GM13977 (cell line): ENCODE measurements at regions of chr13 and their contacts with region 1.

Region 1: GRCh38 chr13:42333613-42334328 is 61.8 kb downstream of the AKAP11 start:
- DNase-seq: peak; percentile 54
- CTCF ChIP-seq: peak; percentile 81

Region 2: DNA sequence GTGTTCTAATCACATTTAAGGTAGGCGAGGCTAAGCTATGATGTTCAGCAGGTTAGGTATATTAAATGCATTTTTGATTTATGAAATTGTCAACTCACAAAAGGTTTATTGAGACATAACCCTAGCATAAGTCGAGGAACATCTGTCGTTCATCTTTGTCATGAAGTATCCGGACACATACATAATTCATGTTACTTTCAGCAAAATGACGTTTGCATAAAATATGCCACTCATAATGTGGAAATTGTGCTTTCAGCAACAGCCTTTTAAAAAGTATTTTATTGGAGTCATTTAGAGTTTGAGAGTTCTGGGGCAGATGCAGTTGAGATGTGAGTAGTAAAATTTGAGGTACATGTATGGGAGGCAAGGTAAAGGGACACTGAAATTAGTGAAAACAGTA is 956.3 kb before region 1 on chr13:
- in situ Hi-C with region 1: no loop called
- DNase-seq: no peak
- CTCF ChIP-seq: no peak

Region 3: DNA sequence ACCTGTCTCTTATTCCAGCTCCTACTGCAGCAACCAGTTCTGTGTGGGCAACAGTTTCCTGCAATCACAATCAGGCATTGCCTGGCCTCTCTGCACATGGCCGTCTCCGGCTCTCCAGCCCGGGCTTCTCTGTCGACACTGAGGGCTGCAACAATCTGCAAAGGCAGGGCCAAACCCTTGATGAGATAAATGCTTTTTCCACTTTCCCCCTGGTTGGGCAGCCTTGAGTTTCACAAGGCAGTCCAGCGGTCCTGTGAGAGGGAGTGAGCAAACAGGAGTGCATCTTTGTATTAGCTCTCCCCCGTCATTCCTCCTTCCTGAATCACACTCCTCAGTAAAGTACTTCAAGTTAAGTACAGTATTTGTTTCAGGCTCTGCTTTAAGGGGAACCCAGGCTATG is 332.2 kb before region 1 on chr13:
- in situ Hi-C with region 1: no loop called
- DNase-seq: no peak
- CTCF ChIP-seq: no peak

Region 4: DNA sequence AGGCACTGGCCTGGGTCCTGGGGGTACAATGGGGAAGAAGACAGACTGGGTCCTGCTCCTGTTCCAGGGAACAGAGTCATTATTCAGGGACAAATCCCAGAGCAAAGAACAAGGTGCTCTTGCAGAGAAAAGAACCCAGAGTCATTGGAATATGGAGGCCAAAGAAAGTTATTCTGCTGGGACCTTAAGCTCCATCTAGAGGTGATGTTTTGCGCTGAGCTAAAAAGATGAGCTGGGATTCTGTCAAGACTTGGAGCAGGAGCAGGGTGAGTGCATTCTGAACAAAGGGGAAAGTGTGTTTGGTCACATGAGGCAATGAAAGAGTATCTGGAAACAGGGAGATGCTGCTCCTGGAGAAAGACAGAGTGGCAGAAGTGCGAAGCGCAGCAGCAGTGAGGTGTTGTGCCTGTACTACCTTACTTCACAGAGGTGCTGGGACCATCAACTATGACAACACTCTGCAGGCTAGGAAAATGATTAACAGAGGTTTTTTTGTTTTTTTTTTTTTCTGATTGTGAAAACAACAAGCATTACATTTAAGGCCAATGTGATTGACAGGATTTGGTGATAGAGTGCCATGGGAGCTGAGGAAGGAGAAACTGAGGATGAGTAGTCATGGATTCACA is 144.9 kb after region 1 on chr13:
- in situ Hi-C with region 1: loop called (anchors 25 kb)
- DNase-seq: peak; percentile 38
- CTCF ChIP-seq: peak; percentile 52

Region 5: GRCh38 chr13:42594970-42595571 is 261.3 kb after region 1 on chr13:
- in situ Hi-C with region 1: loop called (anchors 25 kb)
- DNase-seq: peak; percentile 69
- CTCF ChIP-seq: peak; percentile 80

Region 6: DNA sequence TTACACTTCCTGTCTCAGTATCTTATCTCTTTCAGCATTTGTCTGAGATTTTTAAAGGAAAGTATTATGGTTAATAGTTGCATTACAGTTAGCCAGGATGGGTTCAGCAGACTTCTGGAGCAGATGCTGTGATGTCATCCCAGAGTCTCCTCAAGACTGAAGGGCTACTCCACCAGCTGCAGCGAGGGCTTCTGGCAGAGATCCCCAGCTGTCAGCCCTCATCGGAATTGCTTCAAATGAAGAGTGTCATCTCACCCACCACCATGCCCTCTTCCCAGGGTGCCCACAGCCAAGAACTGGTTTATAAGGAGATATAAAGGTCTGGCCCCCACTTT is 532.0 kb after region 1 on chr13:
- in situ Hi-C with region 1: no loop called
- DNase-seq: no peak
- CTCF ChIP-seq: no peak

Region 7: GRCh38 chr13:43473437-43473836 is 1139.7 kb after region 1 on chr13:
- in situ Hi-C with region 1: no loop called
- DNase-seq: no peak
- CTCF ChIP-seq: no peak